Heart left ventricle (tissue), 16 donors: ENCODE measurements at regions of chr9 and their contacts with region 1.

Region 1: GRCh38 chr9:4662108-4662988 is at the start of gene PLPP6:
- DNase-seq: peak; percentile 88 to 92 (median 90)
- ATAC-seq: peak; percentile 92 to 97 (median 96)
- H3K4me3 ChIP-seq: peak within 1 kb of the TSS; percentile 50 to 96 (median 81)
- H3K27ac ChIP-seq: peak within 1 kb of the TSS; percentile 27 to 90 (median 78)
- H3K4me1 ChIP-seq: peaks cover 0 to 51% (median 32%) of the 10 kb centered on the region in 12 donors
- H3K27me3 ChIP-seq: no peaks in the 10 kb centered on the region
- CTCF ChIP-seq: peak; percentile 29 to 72 (median 52)
- POLR2A ChIP-seq: peak in 1 of 2 donors; percentile 74
- total RNA-seq, gene PLPP6: 2.4 to 5.4 (median 3.6) TPM

Region 2: GRCh38 chr9:4596165-4596922 is 66.0 kb before region 1 on chr9:
- intact Hi-C with region 1: loop called in 1 of 10 experiments (anchors 10 kb)
- DNase-seq: no peak
- ATAC-seq: peak in 3 of 4 donors; percentile 20 to 62 (median 57)
- H3K4me3 ChIP-seq: no peak overlapping the region
- H3K27ac ChIP-seq: peak overlapping the region in 8 of 12 donors; percentile 1 to 44 (median 17)
- H3K4me1 ChIP-seq: peaks cover 0 to 18% (median 3%) of the 10 kb centered on the region in 12 donors
- H3K27me3 ChIP-seq: no peaks in the 10 kb centered on the region
- CTCF ChIP-seq: no peak
- POLR2A ChIP-seq: no peak

Region 3: DNA sequence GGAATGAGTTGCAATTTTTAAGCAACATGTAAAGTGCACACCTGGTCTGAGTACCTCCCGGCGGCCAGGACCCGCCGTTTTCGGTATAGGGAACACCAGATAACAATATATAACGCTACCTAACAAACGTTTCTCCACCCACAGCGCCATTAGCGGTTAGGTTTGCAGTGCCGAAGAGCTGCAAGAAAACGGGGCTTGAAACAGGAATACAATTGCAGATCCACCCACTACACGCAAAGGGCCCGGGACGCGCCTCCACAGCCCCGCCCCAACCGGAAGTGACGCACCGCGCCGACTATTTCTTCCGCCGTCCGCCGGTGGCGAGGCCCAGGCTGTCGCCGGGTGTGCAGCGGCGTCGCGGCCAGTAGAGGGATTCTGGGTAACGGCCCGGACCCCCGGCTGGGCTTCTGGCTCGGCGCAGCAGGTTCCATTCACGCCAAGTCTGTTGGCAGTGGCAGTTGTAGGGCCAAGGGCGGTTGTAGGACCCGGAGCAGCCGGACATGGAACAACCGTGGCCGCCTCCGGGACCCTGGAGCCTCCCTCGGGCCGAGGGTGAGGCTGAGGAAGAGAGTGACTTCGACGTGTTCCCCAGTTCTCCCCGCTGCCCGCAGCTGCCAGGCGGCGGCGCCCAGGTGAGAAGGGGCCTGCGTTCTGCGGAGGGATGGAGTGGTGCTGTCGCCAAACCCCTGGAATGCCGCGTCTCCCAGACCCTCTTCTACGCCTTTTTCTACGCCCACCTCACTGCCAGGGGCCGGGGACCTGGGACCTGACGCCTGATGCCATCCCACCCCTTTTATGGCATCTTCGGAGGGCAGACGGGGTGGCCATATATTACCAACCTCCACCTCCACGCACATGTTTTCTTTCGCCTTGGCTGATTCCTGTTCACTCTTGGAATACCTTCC is 17.2 kb after region 1 on chr9 and contains the start of gene CDC37L1:
- intact Hi-C with region 1: loop called in 2 of 10 experiments (anchors 1 to 2 kb)
- DNase-seq: peak; percentile 98 to 99 (median 99)
- ATAC-seq: peak; percentile 98 to 99 (median 99)
- H3K4me3 ChIP-seq: peak within 1 kb of the TSS; percentile 68 to 96 (median 82)
- H3K27ac ChIP-seq: peak within 1 kb of the TSS; percentile 93 to 99 (median 97)
- H3K4me1 ChIP-seq: peaks cover 0 to 36% (median 23%) of the 10 kb centered on the region in 12 donors
- H3K27me3 ChIP-seq: no peaks in the 10 kb centered on the region
- CTCF ChIP-seq: peak; percentile 41 to 81 (median 68)
- POLR2A ChIP-seq: peak; percentile 83 to 98
- total RNA-seq, gene CDC37L1: 29.3 to 100 (median 34.9) TPM

Region 4: GRCh38 chr9:4713849-4714248 is 51.5 kb after region 1 on chr9:
- intact Hi-C with region 1: no loop called
- DNase-seq: no peak
- ATAC-seq: peak in 3 of 4 donors; percentile 27 to 67 (median 33)
- H3K4me3 ChIP-seq: no peak overlapping the region
- H3K27ac ChIP-seq: no peak overlapping the region
- H3K4me1 ChIP-seq: no peaks in the 10 kb centered on the region
- H3K27me3 ChIP-seq: no peaks in the 10 kb centered on the region
- CTCF ChIP-seq: no peak
- POLR2A ChIP-seq: no peak